Dendritic cell treated with granulocyte-macrophage colony-stimulating factor and Interleukin-4, amounts not matched to agents 40 ng/mL and 50 ng/mL, for 4 days (primary cell): ENCODE measurements at regions of chr14 and their contacts with region 1.

Region 1: DNA sequence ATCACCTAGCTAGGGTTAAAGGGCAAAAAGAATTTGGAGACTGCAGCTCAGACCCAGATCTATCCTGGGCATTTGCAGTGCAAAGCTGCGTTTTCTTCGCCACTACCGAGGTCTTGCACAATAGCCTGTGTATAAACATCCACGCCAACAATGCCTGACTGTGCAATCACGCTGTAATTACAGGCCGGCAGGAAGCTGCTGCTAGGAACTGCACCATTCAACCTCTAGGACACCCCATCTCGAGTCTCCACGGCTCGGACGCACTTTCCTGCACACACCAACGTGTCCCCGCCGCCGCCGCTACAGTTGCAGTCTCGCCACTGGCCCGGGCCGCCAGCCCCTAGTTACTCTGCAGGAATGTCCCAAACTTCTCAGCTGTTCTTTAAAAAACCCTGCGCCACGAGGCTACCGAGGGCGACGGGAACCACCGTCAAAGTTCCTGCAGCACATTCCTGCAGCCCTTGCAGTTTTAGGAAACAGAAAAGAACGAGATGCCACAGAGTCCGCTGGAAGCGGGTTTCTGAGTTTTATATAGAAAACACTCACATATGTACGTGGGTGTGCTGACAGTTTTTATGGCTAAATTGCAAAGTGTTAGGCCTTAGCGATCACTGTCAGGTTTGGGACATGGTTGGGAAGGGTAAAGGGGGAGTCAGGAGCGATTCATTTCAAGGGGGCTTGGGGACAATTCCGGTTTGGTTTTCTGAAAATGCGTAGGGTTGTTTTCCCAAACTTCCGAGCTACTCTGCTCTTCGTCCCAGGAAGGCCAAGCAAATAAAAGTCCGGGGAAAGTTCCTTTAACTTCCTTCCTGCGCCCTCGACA is 65.5 kb upstream of the PTGR2 start:
- H3K4me3 Mint-ChIP-seq: peak overlapping the region; percentile 84
- H3K27ac Mint-ChIP-seq: peak overlapping the region; percentile 94
- H3K4me1 Mint-ChIP-seq: peaks cover 51% of the 10 kb centered on the region
- H3K27me3 Mint-ChIP-seq: no peaks in the 10 kb centered on the region

Region 2: DNA sequence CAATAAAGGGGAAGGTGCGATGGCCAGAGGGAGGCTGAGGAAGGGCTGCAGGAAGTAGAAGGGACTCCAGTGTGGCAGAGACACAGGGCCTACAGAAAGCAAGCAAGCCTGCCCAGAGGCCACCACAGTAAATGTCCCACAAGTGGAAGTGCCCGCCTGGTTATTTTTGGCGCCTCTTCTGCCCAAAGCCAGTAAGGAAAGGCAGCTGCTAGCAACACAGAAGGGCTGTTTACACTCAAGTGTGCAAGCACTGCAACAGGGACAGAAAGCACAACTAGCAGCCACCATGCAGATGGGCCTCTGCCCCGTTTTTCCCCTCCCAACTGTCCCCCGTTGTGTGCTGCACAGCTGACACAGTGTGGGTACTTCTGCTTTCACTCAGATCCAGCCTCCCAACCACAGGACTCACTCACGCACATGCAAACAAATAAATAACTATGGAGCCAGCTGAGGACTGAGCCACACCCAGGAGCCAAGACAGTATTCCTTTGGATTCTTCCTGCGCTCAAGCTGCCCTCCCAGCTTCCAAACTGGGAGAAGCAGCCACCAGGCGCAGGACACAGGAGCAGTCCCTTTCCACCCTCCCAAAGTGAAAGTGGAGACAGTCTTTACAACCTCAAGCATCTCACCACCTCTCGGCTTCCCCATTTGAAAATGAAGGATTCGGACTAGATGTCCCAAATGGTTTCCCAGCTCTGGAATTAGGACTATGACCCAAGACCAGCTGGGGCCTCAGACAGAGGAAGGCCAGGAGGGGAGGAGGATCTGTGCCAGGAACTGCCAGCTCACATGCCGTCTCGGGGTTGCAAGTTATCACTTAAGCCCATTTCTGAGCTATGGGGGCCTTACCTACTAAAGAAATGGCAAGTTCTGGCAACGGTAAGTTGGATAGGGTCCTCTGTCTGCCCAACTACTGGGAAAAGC is 31.9 kb before region 1 on chr14:
- intact Hi-C with region 1: loop called (anchors 2 kb)
- H3K4me3 Mint-ChIP-seq: peak overlapping the region; percentile 74
- H3K27ac Mint-ChIP-seq: peak overlapping the region; percentile 88
- H3K4me1 Mint-ChIP-seq: peaks cover 98% of the 10 kb centered on the region
- H3K27me3 Mint-ChIP-seq: no peaks in the 10 kb centered on the region

Region 3: GRCh38 chr14:73771848-73772638 is 14.0 kb before region 1 on chr14:
- intact Hi-C with region 1: loop called (anchors 2 kb)
- H3K4me3 Mint-ChIP-seq: peak overlapping the region; percentile 31
- H3K27ac Mint-ChIP-seq: peak overlapping the region; percentile 86
- H3K4me1 Mint-ChIP-seq: peaks cover 73% of the 10 kb centered on the region
- H3K27me3 Mint-ChIP-seq: no peaks in the 10 kb centered on the region

Region 4: DNA sequence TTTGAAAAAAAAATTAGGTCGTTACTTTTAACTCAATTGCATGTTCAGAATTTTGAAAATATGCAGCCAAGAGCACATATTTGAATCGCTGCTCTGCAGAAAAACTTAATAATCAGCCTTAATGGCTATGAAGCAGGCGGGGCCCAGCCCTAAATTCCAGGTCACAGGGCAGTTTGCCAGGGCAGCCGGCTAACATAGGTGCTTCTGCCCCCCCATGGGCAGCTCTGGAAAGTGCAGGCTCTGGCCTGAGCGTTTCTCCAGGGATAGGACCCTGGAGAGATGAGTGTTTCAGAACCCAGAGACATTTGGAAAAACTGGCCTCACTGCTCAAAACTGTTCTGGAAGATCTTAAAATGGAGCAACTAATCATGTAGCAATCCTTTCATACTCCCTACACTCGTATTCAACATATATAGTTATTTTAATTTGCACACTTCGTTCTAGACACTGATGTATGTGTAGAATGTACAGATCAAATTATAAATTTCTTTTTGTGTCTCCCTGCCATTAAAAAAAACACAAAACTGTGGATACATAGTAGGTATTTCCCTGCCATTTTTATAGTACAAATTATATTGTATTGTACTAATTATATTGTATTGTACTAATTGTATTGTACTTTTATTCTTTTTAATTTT is 39.6 kb after region 1 on chr14:
- intact Hi-C with region 1: loop called (anchors 2 kb)
- H3K4me3 Mint-ChIP-seq: no peak overlapping the region
- H3K27ac Mint-ChIP-seq: no peak overlapping the region
- H3K4me1 Mint-ChIP-seq: peaks cover 11% of the 10 kb centered on the region
- H3K27me3 Mint-ChIP-seq: no peaks in the 10 kb centered on the region